ENCODE measurements at regions of chr9 and their contacts with region 1.

Region 1: GRCh38 chr9:69385581-69386033 is 60.6 kb downstream of the ENTREP1 start:
- DNase-seq: peak; percentile 75
- H3K4me3 ChIP-seq: no peak overlapping the region
- H3K27ac ChIP-seq: no peak overlapping the region
- H3K4me1 ChIP-seq: peaks cover 12 to 20% (median 15%) of the 10 kb centered on the region in 4 donors
- H3K27me3 ChIP-seq: no peaks in the 10 kb centered on the region
- CTCF ChIP-seq: no peak
- EP300 ChIP-seq: no peak
- POLR2A ChIP-seq: no peak

Region 2: GRCh38 chr9:69223605-69224004 is 162.0 kb before region 1 on chr9:
- intact Hi-C with region 1: loop called (anchors 10 kb)
- DNase-seq: no peak
- H3K4me3 ChIP-seq: no peak overlapping the region
- H3K27ac ChIP-seq: no peak overlapping the region
- H3K4me1 ChIP-seq: peaks cover 0 to 8% (median 0%) of the 10 kb centered on the region in 4 donors
- H3K27me3 ChIP-seq: no peaks in the 10 kb centered on the region
- CTCF ChIP-seq: peak; percentile 32 to 69 (median 37)
- EP300 ChIP-seq: no peak
- POLR2A ChIP-seq: no peak

Measured in esophagus muscularis mucosa (tissue), 4 donors.